CD4-positive, alpha-beta memory T cell (primary cell): ENCODE measurements at regions of chr11 and their contacts with region 1.

Region 1: GRCh38 chr11:68584097-68584496 is 100.2 kb upstream of the GAL start:
- DNase-seq: peak; percentile 35 to 46 (median 40)
- H3K4me3 ChIP-seq: no peak overlapping the region
- H3K4me3 Mint-ChIP-seq: no peak overlapping the region
- H3K27ac ChIP-seq: no peak overlapping the region
- H3K27ac Mint-ChIP-seq: peak overlapping the region in 2 of 7 donors; percentile 31 to 36
- H3K4me1 ChIP-seq: no peaks in the 10 kb centered on the region
- H3K4me1 Mint-ChIP-seq: peaks cover 6 to 13% (median 8%) of the 10 kb centered on the region in 4 donors
- H3K27me3 ChIP-seq: no peaks in the 10 kb centered on the region
- H3K27me3 Mint-ChIP-seq: no peaks in the 10 kb centered on the region

Region 2: GRCh38 chr11:68569357-68569756 is 14.7 kb before region 1 on chr11:
- CTCF ChIA-PET with region 1: interaction called, 20 read pairs
- POLR2A ChIA-PET with region 1: no interaction called
- intact Hi-C with region 1: no loop called
- DNase-seq: peak in 1 of 5 donors; percentile 11
- H3K4me3 ChIP-seq: no peak overlapping the region
- H3K4me3 Mint-ChIP-seq: no peak overlapping the region
- H3K27ac ChIP-seq: no peak overlapping the region
- H3K27ac Mint-ChIP-seq: no peak overlapping the region
- H3K4me1 ChIP-seq: peaks cover 10% of the 10 kb centered on the region
- H3K4me1 Mint-ChIP-seq: peaks cover 18 to 39% (median 35%) of the 10 kb centered on the region in 4 donors
- H3K27me3 ChIP-seq: no peaks in the 10 kb centered on the region
- H3K27me3 Mint-ChIP-seq: no peaks in the 10 kb centered on the region

Region 3: DNA sequence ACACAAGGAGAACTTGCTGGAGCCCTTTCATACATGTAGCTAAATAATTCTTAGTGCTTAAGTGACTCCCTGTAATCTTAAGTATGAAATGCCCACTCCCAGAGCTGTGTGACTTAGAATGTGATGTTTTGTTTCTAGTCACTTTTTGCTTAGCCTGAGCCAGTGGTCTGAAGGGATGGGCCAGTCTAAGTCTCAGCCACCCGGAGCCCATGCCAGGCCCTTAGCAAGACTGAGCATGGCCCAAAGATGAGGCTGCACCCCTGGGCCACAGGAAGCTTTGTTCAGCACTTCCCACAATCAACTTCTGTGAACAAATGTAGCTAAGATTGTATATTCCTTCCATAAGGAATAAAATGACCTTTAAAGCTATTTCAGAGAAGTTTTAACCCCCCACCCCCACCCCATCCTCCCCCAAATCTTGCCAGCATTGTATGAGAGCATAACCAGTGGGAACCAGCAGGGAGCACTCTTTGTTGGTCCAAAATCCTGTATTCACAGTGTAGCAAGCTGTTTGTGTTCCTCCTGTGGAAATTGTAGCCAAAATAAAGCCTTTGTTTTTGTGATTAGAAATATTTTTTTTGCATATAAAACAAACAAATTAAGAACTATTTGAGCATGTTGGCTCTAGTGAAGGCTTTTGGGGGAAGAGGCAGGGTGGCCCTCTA is 26.5 kb after region 1 on chr11:
- CTCF ChIA-PET with region 1: interaction called, 13 read pairs
- POLR2A ChIA-PET with region 1: no interaction called
- intact Hi-C with region 1: no loop called
- DNase-seq: no peak
- H3K4me3 ChIP-seq: no peak overlapping the region
- H3K4me3 Mint-ChIP-seq: no peak overlapping the region
- H3K27ac ChIP-seq: no peak overlapping the region
- H3K27ac Mint-ChIP-seq: no peak overlapping the region
- H3K4me1 ChIP-seq: no peaks in the 10 kb centered on the region
- H3K4me1 Mint-ChIP-seq: no peaks in the 10 kb centered on the region
- H3K27me3 ChIP-seq: no peaks in the 10 kb centered on the region
- H3K27me3 Mint-ChIP-seq: no peaks in the 10 kb centered on the region

Region 4: GRCh38 chr11:68832476-68833181 is 248.5 kb after region 1 on chr11:
- CTCF ChIA-PET with region 1: no interaction called
- POLR2A ChIA-PET with region 1: no interaction called
- intact Hi-C with region 1: no loop called
- DNase-seq: no peak
- H3K4me3 ChIP-seq: no peak overlapping the region
- H3K4me3 Mint-ChIP-seq: no peak overlapping the region
- H3K27ac ChIP-seq: no peak overlapping the region
- H3K27ac Mint-ChIP-seq: peak overlapping the region in 4 of 7 donors; percentile 42 to 65 (median 50)
- H3K4me1 ChIP-seq: peaks cover 37% of the 10 kb centered on the region
- H3K4me1 Mint-ChIP-seq: peaks cover 19 to 70% (median 47%) of the 10 kb centered on the region in 4 donors
- H3K27me3 ChIP-seq: no peaks in the 10 kb centered on the region
- H3K27me3 Mint-ChIP-seq: no peaks in the 10 kb centered on the region